Activated CD8-positive, alpha-beta memory T cell treated with anti-CD3 and anti-CD28 coated beads, Interleukin-2, amount 10 ng/mL, durations not matched to agents 7 days and 5 days (primary cell): ENCODE measurements at regions of chr1 and their contacts with region 1.

Region 1: DNA sequence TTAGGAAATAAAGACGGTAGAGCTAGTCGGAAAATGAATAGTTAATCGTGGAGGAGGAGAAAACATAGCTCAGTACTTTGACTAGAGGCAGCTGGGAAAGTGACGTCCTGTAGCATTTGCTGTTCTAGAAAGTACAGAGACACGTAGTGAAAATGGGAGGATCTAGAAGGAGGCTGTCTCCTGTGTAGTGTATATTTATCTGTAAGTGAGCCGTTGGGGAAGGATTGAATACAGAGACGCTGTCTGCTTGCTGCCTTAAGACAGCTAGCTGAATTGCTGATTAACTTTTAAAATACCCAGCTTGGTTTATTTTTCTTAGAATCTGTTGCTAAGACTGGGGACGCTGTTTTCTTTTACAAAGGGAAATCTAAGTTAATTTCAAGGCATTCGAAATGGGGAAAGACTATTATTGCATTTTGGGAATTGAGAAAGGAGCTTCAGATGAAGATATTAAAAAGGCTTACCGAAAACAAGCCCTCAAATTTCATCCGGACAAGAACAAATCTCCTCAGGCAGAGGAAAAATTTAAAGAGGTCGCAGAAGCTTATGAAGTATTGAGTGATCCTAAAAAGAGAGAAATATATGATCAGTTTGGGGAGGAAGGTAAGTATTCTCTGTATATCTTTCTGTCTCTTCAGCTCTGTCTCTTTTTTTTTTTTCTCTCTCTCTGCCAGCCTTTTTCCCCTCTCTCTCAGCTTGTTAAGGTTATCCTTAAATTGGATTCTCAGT is at the start of gene DNAJB4:
- DNase-seq: peak; percentile 85
- ATAC-seq: peak; percentile 96
- H3K4me3 Mint-ChIP-seq: peak within 1 kb of the TSS; percentile 92
- H3K27ac Mint-ChIP-seq: peak within 1 kb of the TSS; percentile 99
- H3K4me1 Mint-ChIP-seq: peaks cover 39% of the 10 kb centered on the region
- H3K27me3 Mint-ChIP-seq: peaks cover 3% of the 10 kb centered on the region
- total RNA-seq, gene DNAJB4: 11.5 to 23.0 TPM

Region 2: DNA sequence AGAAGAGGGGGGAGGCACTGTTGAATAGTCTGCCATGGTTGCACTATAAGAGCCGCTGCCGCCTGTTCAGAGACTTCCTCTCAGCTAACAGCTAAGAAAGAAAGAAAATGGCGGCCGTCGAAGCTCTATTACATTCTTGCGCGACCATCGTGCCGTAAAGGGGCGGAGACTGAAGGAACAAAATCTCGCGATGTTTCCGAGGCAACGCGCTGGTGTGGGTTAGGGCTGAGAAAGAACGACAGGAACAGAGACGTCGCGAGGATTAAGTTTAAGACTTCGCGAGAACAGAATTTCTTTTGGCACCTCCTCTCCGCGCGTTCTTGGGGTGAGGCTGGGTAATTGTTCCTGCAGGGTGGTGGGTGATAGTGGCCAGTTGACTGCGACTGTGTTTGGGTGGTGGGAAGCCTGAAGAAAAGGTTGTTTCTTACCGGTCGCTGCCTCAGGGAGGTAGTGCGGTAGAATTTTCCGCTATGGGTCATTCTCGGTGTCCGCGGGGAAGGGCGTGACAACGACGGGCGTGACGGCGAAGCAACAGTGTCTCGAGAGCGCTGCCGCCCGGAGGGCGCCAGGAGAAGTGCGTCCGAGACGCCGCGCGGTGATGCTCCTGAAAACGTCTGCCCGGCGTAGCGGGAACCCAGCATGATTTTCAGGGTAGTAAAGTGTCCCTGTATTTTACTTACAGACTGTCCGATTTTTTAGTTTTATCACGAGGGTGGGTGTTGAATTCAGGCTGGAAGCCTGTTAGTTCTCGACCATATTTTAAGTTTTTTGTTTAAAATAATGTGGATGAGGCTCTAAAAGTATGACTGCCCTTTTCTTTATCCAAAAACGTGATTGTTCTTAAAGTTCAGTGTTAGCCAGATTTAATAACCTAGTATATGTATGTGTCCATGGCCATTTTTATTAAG is 25.7 kb before region 1 on chr1 and contains the start of gene FUBP1:
- CTCF ChIA-PET with region 1: interaction called, 17 read pairs
- DNase-seq: peak; percentile 98
- ATAC-seq: peak; percentile 79
- H3K4me3 Mint-ChIP-seq: no peak within 1 kb of the TSS
- H3K27ac Mint-ChIP-seq: no peak within 1 kb of the TSS
- H3K4me1 Mint-ChIP-seq: peaks cover 43% of the 10 kb centered on the region
- H3K27me3 Mint-ChIP-seq: no peaks in the 10 kb centered on the region
- total RNA-seq, gene FUBP1: 220 to 222 TPM

Region 3: DNA sequence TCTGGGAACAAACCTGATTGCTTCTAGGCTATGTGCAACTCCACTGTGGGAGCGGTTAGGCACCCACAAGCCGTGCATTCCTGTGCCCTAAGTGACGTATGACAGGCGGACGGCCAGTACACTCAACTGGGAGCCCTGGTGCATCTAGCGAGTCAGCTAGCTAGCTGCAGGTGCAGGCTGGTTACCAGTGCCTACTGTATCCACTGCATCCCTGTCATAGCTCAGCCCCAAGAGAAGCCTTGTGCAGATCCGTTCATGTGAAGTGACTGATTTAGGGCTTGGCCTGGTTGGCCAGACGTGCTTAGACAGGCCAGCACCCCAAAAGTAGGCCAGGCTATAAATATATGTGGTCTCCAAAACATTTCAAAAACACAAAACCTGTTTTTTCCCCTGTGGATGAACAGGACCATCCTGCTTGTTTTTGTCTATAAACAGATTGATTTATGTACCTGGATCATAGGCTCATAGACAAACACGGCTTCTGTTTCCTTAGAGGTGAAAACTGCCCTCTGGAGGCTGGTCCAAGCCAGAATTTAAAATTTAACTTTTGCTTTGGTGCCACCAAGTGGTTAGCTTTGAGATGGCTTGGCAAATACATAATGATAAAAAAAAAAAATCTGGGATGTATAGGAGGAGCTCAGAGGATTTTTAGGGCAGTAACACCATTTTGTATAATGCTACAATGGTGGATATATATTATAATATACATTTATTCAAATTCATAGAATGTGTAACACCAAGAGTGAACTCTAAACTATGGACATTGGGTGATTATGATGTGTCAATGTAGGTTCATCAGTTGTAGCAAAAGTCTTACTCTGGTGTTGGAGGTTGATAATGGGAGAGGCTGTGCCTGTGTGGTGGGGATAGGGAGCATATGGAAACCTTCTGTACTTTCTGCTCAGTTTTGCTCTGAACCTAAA is 109.4 kb after region 1 on chr1:
- CTCF ChIA-PET with region 1: interaction called, 13 read pairs
- DNase-seq: peak; percentile 70
- ATAC-seq: peak; percentile 85
- H3K4me3 Mint-ChIP-seq: no peak overlapping the region
- H3K27ac Mint-ChIP-seq: no peak overlapping the region
- H3K4me1 Mint-ChIP-seq: peaks cover 6% of the 10 kb centered on the region
- H3K27me3 Mint-ChIP-seq: peaks cover 5% of the 10 kb centered on the region